ENCODE measurements at regions of chr3 and their contacts with region 1.

Region 1: DNA sequence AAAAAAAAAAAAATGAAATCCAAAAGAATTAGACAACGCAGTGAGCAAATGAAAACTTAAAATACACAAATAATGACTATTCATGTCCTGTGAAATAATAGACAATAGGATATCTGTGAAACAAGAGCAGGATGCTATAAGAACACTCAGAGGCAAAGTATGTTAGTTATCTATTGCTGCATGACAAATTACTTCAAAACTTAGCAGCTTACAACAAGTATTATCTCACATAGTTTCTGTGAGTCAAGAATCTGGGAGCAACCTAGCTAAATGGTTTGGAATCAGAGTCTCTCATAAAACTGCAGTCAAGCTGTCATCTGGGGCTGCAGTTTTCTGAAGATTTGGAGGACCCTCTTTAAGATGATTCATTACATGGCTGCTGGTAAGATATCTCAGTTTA is 36.5 kb upstream of the ZMAT3 start:
- DNase-seq: no peak
- ATAC-seq: no peak
- H3K4me3 Mint-ChIP-seq: no peak overlapping the region
- H3K27ac Mint-ChIP-seq: no peak overlapping the region
- H3K4me1 Mint-ChIP-seq: no peaks in the 10 kb centered on the region
- H3K27me3 Mint-ChIP-seq: peaks cover 5% of the 10 kb centered on the region

Region 2: GRCh38 chr3:179083977-179084376 is 24.1 kb before region 1 on chr3:
- CTCF ChIA-PET with region 1: interaction called, 10 read pairs
- POLR2A ChIA-PET with region 1: no interaction called
- intact Hi-C with region 1: no loop called
- DNase-seq: no peak
- ATAC-seq: peak; percentile 65
- H3K4me3 Mint-ChIP-seq: no peak overlapping the region
- H3K27ac Mint-ChIP-seq: no peak overlapping the region
- H3K4me1 Mint-ChIP-seq: peaks cover 14% of the 10 kb centered on the region
- H3K27me3 Mint-ChIP-seq: no peaks in the 10 kb centered on the region

Measured in activated CD4-positive, alpha-beta T cell treated with anti-CD3 and anti-CD28 coated beads for 36 hours (primary cell).